MCF 10A (cell line): ENCODE measurements at regions of chr9 and their contacts with region 1.

Region 1: DNA sequence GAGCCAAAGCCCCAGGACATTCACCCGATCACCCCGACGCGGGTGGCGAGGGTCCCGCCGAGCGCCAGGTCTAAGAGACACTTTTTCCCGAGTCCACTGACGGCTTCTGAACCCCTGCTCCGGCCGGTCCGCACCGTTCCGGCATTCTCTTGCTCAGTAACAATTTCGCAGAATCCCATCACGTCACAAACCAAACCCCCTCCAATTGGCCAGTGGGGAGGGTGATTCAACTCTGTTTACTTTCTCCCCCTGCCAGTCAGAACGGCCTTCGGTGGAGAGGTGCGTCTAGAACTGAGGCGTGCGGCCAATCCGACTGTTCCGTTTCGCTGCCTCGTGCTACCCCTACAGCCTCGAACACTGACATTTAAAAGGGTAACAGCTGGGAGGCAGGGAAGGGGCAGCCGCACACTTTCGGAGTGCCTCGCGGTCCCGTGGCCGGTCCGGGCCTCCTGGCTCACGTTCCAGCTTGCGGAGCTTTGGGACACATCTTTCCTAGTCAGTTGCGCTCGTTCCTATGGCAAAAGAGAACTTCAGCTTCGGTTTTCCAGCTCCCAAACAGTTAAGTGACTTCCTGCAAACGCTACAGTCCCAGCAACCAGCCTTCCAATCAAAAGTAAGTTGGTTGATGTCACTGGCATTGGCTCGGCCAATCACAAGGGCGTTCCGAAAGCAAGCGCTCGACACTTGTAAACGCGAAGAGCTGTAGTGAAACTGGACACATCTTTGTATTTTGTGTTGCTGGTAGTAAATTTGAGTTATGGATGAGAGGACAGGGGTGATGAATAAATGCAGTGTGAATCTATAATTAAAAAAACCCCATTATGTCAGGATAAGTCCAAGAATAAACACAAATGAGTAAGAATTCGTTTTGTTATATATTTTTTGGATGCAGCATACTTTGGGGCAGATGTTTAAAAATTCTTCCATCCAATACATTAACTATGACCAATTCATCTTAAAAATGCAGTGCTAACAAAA is at the start of gene KLF9:
- DNase-seq: peak; percentile 99
- H3K4me3 Mint-ChIP-seq: peak within 1 kb of the TSS; percentile 98
- H3K27ac Mint-ChIP-seq: peak within 1 kb of the TSS; percentile 99
- H3K4me1 Mint-ChIP-seq: peaks cover 19% of the 10 kb centered on the region
- H3K27me3 Mint-ChIP-seq: no peaks in the 10 kb centered on the region
- CTCF ChIP-seq: no peak
- total RNA-seq, gene KLF9: 5.9 and 8.9 TPM in 2 replicates

Region 2: DNA sequence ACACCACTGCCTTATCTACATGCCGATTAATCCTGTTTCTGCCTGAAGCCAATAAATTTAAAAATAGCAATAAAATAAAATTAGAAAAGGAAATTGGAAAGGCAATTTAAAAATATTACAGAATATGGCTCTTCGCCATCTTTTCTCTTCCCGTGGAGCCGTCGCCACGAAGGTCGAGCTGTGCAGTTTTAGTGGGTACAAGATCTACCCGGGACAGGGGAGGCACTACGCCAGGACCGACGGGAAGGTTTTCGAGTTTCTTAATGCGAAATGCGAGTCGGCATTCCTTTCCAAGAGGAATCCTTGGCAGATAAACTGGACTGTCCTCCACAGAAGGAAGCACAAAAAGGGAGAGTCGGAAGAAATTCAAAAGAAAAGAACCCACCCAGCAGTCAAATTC is 197.1 kb before region 1 on chr9:
- CTCF ChIA-PET with region 1: no interaction called
- POLR2A ChIA-PET with region 1: no interaction called
- intact Hi-C with region 1: no loop called
- DNase-seq: no peak
- H3K4me3 Mint-ChIP-seq: no peak overlapping the region
- H3K27ac Mint-ChIP-seq: no peak overlapping the region
- H3K4me1 Mint-ChIP-seq: no peaks in the 10 kb centered on the region
- H3K27me3 Mint-ChIP-seq: no peaks in the 10 kb centered on the region
- CTCF ChIP-seq: no peak

Region 3: DNA sequence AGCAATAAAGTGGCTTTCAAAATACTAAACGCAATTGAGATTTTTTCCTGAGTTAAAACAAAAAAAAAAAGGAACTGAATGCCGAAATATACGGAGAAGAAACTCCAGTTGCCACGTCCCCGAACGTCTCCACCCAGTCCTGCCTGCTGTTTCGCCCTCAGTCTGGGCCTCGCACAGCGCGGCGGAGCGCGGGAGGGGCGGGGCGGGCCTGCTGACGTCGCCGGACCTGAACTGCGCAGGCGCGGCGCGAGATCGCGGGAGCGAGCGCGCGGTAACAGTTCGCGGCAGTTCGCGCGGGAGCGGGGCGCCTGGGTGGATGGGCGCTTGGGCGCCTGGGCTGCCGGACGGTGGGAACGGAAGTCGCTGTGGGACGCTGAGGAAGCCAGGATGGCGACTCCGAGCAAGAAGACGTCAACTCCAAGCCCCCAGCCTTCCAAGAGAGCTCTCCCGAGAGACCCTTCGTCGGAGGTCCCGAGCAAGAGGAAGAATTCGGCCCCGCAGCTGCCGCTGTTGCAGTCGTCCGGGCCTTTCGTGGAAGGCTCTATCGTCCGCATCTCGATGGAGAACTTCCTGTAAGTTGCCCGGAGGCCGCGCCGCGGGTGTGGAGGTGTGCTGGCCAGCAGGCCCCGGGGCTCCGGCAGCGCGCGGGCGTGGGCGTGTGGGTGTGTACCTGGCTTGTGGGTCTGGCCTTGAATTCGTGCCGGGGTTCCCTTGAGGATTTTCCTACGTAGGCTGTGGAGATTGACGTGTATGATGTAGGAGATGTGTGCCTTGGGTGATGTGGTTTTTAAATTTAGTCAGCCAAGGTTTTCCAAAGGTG is 155.2 kb before region 1 on chr9 and contains the start of gene SMC5:
- CTCF ChIA-PET with region 1: interaction called, 5 read pairs
- POLR2A ChIA-PET with region 1: interaction called, 54 read pairs
- intact Hi-C with region 1: loop called (anchors 5 kb)
- DNase-seq: peak; percentile 90
- H3K4me3 Mint-ChIP-seq: peak within 1 kb of the TSS; percentile 97
- H3K27ac Mint-ChIP-seq: peak within 1 kb of the TSS; percentile 99
- H3K4me1 Mint-ChIP-seq: peaks cover 63% of the 10 kb centered on the region
- H3K27me3 Mint-ChIP-seq: no peaks in the 10 kb centered on the region
- CTCF ChIP-seq: no peak
- total RNA-seq, gene SMC5: 29.8 and 31.9 TPM in 2 replicates

Region 4: GRCh38 chr9:70352802-70353201 is 61.3 kb before region 1 on chr9:
- CTCF ChIA-PET with region 1: interaction called, 3 read pairs
- POLR2A ChIA-PET with region 1: interaction called, 4 read pairs
- intact Hi-C with region 1: loop called (anchors 5 kb)
- DNase-seq: peak; percentile 14
- H3K4me3 Mint-ChIP-seq: no peak overlapping the region
- H3K27ac Mint-ChIP-seq: no peak overlapping the region
- H3K4me1 Mint-ChIP-seq: peaks cover 7% of the 10 kb centered on the region
- H3K27me3 Mint-ChIP-seq: no peaks in the 10 kb centered on the region
- CTCF ChIP-seq: peak; percentile 26

Region 5: DNA sequence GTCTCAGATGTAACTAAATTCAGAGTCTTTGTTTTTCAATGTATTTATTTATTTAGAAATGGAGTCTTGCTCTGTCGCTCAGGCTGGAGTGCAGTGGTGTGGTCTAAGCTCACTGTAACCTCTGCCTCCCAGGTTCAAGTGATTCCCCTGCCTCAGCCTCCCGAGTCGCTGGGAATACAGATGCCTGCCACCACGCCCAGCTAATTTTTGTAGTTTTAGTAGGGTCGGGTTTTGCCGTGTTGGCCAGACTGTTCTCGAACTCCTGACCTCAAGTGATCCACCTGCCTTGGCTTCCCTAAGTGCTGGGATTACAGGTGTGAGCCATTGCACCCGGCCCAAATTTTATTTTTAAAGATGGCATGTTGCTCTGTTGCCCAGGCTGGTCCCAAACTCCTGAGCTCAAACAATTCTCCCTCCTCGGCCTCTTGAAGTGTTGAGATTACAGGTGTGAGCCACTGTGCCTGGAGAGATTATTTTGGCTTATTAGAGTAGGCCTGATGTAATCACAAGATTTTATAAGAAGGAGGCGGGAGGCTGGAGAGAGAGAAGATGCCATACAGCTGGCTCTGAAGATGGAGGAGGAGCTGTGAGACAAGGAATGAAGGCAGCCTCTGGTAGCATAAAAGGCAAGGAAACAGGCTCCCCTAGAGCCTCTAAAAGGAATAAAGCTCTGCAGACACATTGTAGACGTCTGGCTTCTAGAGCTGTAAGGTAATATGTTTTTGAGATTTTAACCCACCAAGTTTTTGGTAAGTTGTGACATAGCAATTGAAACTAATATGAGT is 13.3 kb after region 1 on chr9:
- CTCF ChIA-PET with region 1: interaction called, 3 read pairs
- POLR2A ChIA-PET with region 1: interaction called, 54 read pairs
- intact Hi-C with region 1: no loop called
- DNase-seq: no peak
- H3K4me3 Mint-ChIP-seq: no peak overlapping the region
- H3K27ac Mint-ChIP-seq: no peak overlapping the region
- H3K4me1 Mint-ChIP-seq: peaks cover 12% of the 10 kb centered on the region
- H3K27me3 Mint-ChIP-seq: no peaks in the 10 kb centered on the region
- CTCF ChIP-seq: no peak

Region 6: DNA sequence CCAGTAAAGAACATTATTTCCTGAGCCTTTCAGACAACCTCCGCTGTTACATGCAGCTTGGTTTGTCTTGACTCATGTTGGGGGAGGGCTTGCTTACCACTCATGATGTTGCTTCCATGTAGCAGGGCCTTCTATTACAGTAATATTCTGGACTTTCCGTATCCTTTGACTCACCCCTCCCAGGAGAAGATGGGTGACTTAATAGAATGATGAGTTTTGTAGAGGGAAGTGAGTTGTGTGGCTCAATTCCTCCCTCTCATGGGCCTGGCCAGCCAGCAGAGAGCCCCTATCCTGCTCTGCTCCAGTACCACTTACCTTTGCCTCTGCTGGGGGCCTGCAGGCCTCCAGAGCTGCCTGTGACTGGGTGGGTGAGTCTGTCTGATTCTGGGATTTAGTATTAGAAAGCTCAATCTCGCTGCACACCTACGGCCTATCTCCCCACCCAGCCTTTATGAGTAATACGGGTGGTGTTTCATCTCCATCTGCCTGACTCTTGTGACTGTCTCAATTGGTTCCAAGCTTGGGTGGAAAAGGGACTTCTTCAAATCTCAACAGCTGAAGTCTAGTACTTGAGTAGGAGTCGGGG is 53.0 kb after region 1 on chr9:
- CTCF ChIA-PET with region 1: interaction called, 3 read pairs
- POLR2A ChIA-PET with region 1: interaction called, 5 read pairs
- intact Hi-C with region 1: loop called (anchors 2 kb)
- DNase-seq: peak; percentile 65
- H3K4me3 Mint-ChIP-seq: no peak overlapping the region
- H3K27ac Mint-ChIP-seq: no peak overlapping the region
- H3K4me1 Mint-ChIP-seq: peaks cover 15% of the 10 kb centered on the region
- H3K27me3 Mint-ChIP-seq: no peaks in the 10 kb centered on the region
- CTCF ChIP-seq: no peak

Region 7: GRCh38 chr9:70490478-70490877 is 76.4 kb after region 1 on chr9:
- CTCF ChIA-PET with region 1: interaction called, 27 read pairs
- POLR2A ChIA-PET with region 1: interaction called, 76 read pairs
- intact Hi-C with region 1: no loop called
- DNase-seq: peak; percentile 30
- H3K4me3 Mint-ChIP-seq: no peak overlapping the region
- H3K27ac Mint-ChIP-seq: no peak overlapping the region
- H3K4me1 Mint-ChIP-seq: peaks cover 26% of the 10 kb centered on the region
- H3K27me3 Mint-ChIP-seq: peaks cover 11% of the 10 kb centered on the region
- CTCF ChIP-seq: no peak